HAP-1 (cell line): ENCODE measurements at regions of chr7 and their contacts with region 1.

Region 1: DNA sequence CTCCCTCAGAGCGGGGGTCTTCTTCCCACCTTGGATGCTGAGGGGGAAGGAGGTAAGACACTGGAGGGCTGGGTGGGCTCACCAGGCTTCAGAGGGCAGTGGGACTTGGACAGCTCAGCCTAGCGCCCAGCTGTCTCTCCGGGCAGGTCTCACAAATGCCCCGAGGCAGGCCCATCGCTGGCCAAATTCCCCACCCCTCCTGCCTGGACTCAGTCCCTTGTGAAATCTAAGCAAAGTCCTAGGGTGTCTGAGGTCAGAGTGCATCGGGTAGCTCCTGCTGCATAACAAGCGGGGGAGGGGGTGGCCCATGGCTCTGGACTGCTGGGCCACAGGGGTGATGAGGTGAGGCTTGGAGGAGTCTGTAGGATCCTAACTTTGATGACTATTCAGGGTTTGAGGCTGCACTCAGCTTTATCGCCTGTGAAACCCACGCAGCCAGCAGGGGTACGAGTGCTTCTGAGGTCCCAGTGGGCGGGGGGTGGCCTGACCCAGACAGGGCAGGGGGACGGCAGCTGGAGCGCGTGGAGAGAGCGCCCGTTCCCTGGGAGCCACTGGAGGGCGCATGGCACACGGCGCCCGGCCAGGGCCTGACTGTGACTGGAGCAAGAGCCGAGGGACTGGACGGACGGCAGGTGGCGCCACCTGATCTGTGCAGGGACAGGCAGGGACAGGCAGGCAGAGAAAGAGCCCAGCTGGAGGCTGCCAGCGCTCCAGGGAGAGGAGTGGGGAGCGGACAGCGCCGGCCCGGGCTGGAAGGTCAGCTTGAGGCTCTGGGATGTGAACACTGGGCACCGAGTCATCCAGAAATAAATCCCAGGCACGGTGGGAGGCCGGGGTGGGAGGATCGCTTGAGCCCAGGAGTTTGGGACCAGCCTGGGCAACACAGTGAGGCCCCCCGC is 10.0 kb downstream of the CYP2W1 start:
- DNase-seq: peak; percentile 96 to 99
- H3K4me3 ChIP-seq: no peak overlapping the region
- H3K4me1 ChIP-seq: peaks cover 2% of the 10 kb centered on the region; the same call in 1 of the 2 replicates
- H3K27me3 ChIP-seq: no peaks in the 10 kb centered on the region

Region 2: DNA sequence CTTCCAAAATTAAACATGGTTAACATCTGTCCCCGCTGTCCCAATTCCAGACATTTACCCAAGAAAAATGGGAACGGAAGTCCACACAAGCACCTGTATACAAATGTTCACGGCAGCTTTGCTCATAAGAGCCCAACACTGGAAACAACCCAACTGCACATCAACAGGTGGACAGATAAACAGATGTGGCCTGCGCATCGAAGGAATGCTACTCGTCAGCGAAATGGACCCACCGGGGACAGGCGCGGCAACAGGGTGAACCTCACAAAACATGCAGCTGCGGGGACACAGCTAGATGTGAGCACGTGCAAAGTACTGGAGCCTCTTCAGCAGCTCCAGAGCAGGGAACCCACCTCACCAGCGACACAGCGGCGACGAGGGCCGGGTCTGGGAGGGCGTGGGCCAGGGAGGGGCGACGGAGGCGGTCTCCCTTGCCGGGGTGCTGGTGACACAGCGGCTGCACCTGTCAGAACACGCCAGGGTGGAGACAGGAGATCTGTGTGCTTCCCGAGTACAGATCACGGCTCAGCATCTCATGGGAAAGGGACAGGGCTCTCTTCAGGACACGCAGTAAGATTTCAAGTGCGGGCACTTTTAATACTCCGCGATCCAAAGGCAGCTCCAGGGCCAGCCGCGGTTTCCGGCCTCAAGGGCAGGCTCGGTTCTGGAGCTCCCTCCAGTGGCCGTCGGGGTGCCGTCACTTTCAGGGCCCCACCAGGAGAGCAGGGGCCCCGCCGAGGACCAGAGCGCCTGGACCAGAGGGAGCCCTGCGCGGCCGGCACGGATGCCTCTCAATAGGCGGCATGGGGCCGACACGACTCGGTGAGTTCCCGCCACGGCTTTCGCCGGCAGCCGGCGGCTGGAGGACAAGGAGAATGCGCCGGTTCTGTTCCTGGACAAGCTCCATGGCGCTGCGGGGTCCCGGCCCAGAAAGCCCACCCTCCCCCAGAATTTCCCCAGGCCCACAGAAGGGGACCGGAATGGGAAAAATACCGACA is 72.6 kb after region 1 on chr7:
- in situ Hi-C with region 1: loop called (anchors 5 kb)
- DNase-seq: peak; percentile 37 to 89
- H3K4me3 ChIP-seq: no peak overlapping the region
- H3K4me1 ChIP-seq: peaks cover 2% of the 10 kb centered on the region; the same call in 1 of the 2 replicates
- H3K27me3 ChIP-seq: no peaks in the 10 kb centered on the region

Region 3: GRCh38 chr7:1175967-1176851 is 183.3 kb after region 1 on chr7:
- in situ Hi-C with region 1: loop called (anchors 5 kb)
- DNase-seq: peak; percentile 55 to 95
- H3K4me3 ChIP-seq: peak overlapping the region; percentile 9; the same call in 1 of the 2 replicates
- H3K4me1 ChIP-seq: peaks cover 3% of the 10 kb centered on the region; the same call in 1 of the 2 replicates
- H3K27me3 ChIP-seq: no peaks in the 10 kb centered on the region